Mammary epithelial cell (primary cell): ENCODE measurements at regions of chr2 and their contacts with region 1.

Region 1: GRCh38 chr2:15591692-15592463 is at the start of gene DDX1:
- DNase-seq: peak; percentile 84
- H3K4me3 ChIP-seq: peak within 1 kb of the TSS; percentile 87 to 95 (median 87)
- H3K27ac ChIP-seq: peak within 1 kb of the TSS; percentile 79
- H3K4me1 ChIP-seq: peaks cover 6% of the 10 kb centered on the region
- H3K27me3 ChIP-seq: no peaks in the 10 kb centered on the region
- CTCF ChIP-seq: no peak
- total RNA-seq, gene DDX1: 47.2 to 107 TPM

Region 2: DNA sequence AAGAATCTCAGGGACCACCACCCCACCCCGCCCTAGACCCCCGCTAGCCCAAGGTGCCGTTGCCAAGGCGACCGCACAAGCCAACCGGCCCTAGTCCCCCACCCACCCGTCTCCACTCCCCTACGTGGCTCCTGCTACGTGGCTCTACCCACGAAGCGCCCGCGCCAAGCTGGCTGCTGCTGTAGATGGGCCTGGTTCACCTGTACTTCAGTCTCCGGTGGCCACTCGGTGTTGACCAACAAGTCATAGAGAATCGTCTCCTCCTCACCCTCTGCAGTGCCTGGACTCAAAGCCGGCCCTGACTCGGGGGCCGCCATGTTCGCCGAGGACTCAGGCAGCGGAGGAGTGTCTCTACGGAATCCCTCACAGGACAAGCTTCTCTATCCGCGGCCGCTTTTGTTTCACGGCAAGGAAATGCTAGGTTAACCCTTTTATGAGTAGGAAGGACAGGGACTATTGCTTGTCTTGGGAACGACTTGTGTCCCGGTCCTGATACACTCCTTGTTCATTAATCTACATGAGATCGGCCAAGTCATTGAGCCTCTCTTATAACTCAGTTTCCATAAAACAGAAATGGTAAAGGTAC is 30.8 kb before region 1 on chr2 and contains the start of gene NBAS:
- CTCF ChIA-PET with region 1: no interaction called
- dilution Hi-C with region 1: no loop called
- in situ Hi-C with region 1: no loop called
- intact Hi-C with region 1: loop called (anchors 2 kb)
- DNase-seq: peak; percentile 81
- H3K4me3 ChIP-seq: peak within 1 kb of the TSS; percentile 85 to 92 (median 89)
- H3K27ac ChIP-seq: peak within 1 kb of the TSS; percentile 69
- H3K4me1 ChIP-seq: peaks cover 29% of the 10 kb centered on the region
- H3K27me3 ChIP-seq: no peaks in the 10 kb centered on the region
- CTCF ChIP-seq: no peak
- total RNA-seq, gene NBAS: 38.8 to 58.5 TPM

Region 3: GRCh38 chr2:15649556-15650255 is 57.8 kb after region 1 on chr2:
- CTCF ChIA-PET with region 1: no interaction called
- dilution Hi-C with region 1: no loop called
- in situ Hi-C with region 1: no loop called
- intact Hi-C with region 1: no loop called
- DNase-seq: no peak
- H3K4me3 ChIP-seq: no peak overlapping the region
- H3K27ac ChIP-seq: no peak overlapping the region
- H3K4me1 ChIP-seq: no peaks in the 10 kb centered on the region
- H3K27me3 ChIP-seq: no peaks in the 10 kb centered on the region
- CTCF ChIP-seq: no peak

Region 4: GRCh38 chr2:15840148-15840547 is 248.3 kb after region 1 on chr2:
- CTCF ChIA-PET with region 1: no interaction called
- dilution Hi-C with region 1: no loop called
- in situ Hi-C with region 1: no loop called
- intact Hi-C with region 1: no loop called
- DNase-seq: peak; percentile 46
- H3K4me3 ChIP-seq: no peak overlapping the region
- H3K27ac ChIP-seq: no peak overlapping the region
- H3K4me1 ChIP-seq: no peaks in the 10 kb centered on the region
- H3K27me3 ChIP-seq: no peaks in the 10 kb centered on the region
- CTCF ChIP-seq: no peak